Dendritic cell treated with granulocyte-macrophage colony-stimulating factor and Interleukin-4, amounts not matched to agents 40 ng/mL and 50 ng/mL, for 4 days (primary cell): ENCODE measurements at regions of chr2 and their contacts with region 1.

Region 1: DNA sequence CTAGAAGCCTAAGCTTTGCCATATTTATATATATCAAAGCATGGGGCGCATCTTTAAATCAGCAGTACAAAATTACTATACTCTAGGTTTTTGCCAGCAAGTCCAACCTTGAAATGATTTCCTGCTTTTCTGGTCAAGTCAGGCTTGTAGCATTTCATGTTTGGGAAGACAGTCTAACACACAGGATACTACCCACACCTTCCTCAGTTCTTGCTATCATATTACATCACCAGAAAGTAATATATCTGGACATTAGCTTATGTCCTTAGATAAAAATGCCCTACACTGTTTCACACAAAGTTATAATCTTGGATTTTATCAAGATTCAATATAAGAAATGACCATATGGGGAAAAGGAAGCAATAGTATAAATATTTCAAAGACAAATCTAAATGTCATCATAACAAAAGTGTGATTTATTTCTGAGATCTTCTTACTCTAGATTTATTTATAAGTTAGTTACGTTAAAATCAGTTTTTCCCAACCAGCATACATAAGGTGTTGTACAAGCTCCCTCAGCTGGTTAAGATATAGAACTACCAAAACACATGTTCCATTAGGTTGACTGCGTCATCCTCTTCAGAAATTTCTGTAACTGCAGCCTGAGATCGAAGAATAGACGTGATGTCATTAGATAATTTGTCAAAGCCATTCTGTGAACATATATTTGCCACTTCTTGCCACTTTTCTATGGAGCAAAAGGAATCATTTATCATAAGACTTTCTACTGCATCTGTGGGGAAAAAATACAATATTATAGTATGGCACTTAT is 56.7 kb downstream of the CLHC1 start:
- H3K4me3 Mint-ChIP-seq: no peak overlapping the region
- H3K27ac Mint-ChIP-seq: no peak overlapping the region
- H3K4me1 Mint-ChIP-seq: peaks cover 6% of the 10 kb centered on the region
- H3K27me3 Mint-ChIP-seq: no peaks in the 10 kb centered on the region

Region 2: GRCh38 chr2:54735636-54736035 is 439.8 kb before region 1 on chr2:
- intact Hi-C with region 1: loop called (anchors 10 kb)
- H3K4me3 Mint-ChIP-seq: no peak overlapping the region
- H3K27ac Mint-ChIP-seq: no peak overlapping the region
- H3K4me1 Mint-ChIP-seq: no peaks in the 10 kb centered on the region
- H3K27me3 Mint-ChIP-seq: peaks cover 8% of the 10 kb centered on the region

Region 3: DNA sequence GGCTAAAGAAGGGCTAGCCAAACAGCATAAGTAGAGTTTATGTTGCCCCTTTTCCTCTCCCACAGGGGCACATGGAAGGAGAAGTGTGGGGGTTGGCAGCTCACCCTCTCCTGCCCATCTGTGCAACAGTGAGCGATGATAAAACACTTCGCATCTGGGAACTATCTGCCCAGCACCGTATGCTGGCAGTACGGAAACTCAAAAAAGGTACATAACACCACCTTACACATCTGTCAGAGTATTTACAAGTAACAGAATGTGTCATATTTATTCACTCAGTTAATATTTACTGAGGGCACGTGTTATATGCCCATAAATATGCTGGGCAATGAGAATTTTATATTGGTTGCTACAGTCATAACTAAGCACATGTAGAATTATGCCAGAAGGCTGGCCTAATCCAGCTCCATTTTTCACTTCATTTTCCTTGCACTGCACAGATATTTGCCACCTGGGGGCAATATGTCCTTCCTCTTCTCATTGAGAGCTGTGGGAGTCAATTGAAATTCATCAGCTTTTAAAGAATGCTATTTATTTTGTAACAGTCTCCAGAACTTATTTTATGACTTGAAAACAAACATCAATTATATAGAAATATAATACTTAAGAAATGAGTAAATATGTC is 275.8 kb before region 1 on chr2:
- intact Hi-C with region 1: loop called (anchors 5 kb)
- H3K4me3 Mint-ChIP-seq: no peak overlapping the region
- H3K27ac Mint-ChIP-seq: no peak overlapping the region
- H3K4me1 Mint-ChIP-seq: peaks cover 18% of the 10 kb centered on the region
- H3K27me3 Mint-ChIP-seq: no peaks in the 10 kb centered on the region

Region 4: GRCh38 chr2:55038428-55038827 is 137.0 kb before region 1 on chr2:
- intact Hi-C with region 1: no loop called
- H3K4me3 Mint-ChIP-seq: no peak overlapping the region
- H3K27ac Mint-ChIP-seq: no peak overlapping the region
- H3K4me1 Mint-ChIP-seq: peaks cover 34% of the 10 kb centered on the region
- H3K27me3 Mint-ChIP-seq: no peaks in the 10 kb centered on the region

Region 5: DNA sequence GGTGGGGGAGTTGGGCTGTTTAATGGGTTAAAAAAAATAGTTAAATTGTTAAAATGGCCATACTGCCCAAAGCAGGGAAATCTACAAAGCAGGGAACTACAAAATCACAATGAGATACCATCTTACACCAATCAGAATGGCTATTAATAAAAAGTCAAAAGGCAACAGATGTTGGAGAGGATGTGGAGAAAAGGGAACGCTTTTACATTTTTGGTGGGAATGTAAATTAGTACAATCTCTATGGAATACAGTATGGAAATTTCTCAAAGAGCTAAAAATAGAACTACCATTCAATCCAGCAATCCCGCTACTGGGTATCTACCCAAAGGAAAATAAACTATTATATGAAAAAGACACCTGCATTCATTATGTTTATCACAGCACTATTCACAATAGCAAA is 29.5 kb after region 1 on chr2:
- intact Hi-C with region 1: no loop called
- H3K4me3 Mint-ChIP-seq: no peak overlapping the region
- H3K27ac Mint-ChIP-seq: no peak overlapping the region
- H3K4me1 Mint-ChIP-seq: no peaks in the 10 kb centered on the region
- H3K27me3 Mint-ChIP-seq: no peaks in the 10 kb centered on the region